T-cell (primary cell): ENCODE measurements at regions of chr3 and their contacts with region 1.

Region 1: DNA sequence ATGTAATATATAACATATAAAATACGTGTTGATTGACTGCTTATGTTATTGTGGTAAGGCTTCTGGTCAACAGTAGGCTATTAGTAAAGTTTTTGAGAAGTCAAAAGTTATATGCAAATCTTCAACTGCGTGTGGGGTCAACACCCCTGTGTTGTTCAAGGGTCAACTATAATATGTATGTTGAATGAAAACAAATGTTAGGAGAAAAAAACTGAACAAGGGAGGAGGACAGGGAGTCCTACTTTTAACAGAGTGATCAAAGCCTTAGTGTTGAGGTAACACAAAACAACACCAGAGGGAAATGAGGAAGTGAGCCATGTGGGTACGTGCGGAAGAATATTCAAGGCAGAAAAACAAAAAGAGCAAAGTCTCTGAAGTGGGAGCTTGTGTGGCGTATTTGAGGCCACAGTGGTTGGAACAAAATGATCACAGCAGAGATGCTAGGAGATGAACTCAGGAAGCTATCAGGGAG is 62.5 kb downstream of the SFMBT1 start:
- DNase-seq: peak; percentile 22 to 88 (median 51)
- ATAC-seq: peak; percentile 93 to 96 (median 94)
- H3K4me3 ChIP-seq: no peak overlapping the region
- H3K4me3 Mint-ChIP-seq: peak overlapping the region; percentile 53 to 56 (median 55)
- H3K27ac ChIP-seq: peak overlapping the region; percentile 40
- H3K27ac Mint-ChIP-seq: peak overlapping the region; percentile 86 to 93
- H3K4me1 ChIP-seq: peaks cover 13 to 26% of the 10 kb centered on the region in 2 experiments
- H3K4me1 Mint-ChIP-seq: peaks cover 44 to 57% (median 50%) of the 10 kb centered on the region in 3 donors
- H3K27me3 ChIP-seq: no peaks in the 10 kb centered on the region
- H3K27me3 Mint-ChIP-seq: no peaks in the 10 kb centered on the region

Region 2: GRCh38 chr3:52570076-52570475 is 413.3 kb before region 1 on chr3:
- CTCF ChIA-PET with region 1: no interaction called
- POLR2A ChIA-PET with region 1: interaction called in 1 of 2 experiments, 10 read pairs
- DNase-seq: no peak
- ATAC-seq: no peak
- H3K4me3 ChIP-seq: no peak overlapping the region
- H3K4me3 Mint-ChIP-seq: no peak overlapping the region
- H3K27ac ChIP-seq: no peak overlapping the region
- H3K27ac Mint-ChIP-seq: peak overlapping the region in 1 of 2 donors; percentile 16
- H3K4me1 ChIP-seq: no peaks in the 10 kb centered on the region
- H3K4me1 Mint-ChIP-seq: no peaks in the 10 kb centered on the region
- H3K27me3 ChIP-seq: no peaks in the 10 kb centered on the region
- H3K27me3 Mint-ChIP-seq: no peaks in the 10 kb centered on the region

Region 3: DNA sequence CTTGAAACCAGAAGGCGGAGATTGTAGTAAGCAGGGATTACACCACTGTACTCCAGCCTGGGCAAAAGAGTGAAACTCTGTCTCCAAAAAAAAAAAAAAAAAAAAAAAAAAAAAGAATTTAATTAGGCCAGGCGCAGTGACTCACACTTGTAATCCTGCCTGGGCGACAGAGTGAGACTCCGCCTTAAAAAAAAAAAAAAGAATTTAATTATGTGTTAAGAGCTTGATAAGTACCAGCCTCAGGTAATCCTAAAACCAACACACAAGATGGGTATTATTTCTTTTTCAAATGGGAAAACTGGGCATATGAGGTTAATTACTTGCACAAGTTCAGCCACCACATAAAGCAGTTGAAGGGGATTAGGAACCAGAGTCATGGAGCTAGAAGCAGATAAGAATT is 346.7 kb before region 1 on chr3:
- CTCF ChIA-PET with region 1: no interaction called
- POLR2A ChIA-PET with region 1: no interaction called
- DNase-seq: no peak
- ATAC-seq: no peak
- H3K4me3 ChIP-seq: no peak overlapping the region
- H3K4me3 Mint-ChIP-seq: no peak overlapping the region
- H3K27ac ChIP-seq: no peak overlapping the region
- H3K27ac Mint-ChIP-seq: no peak overlapping the region
- H3K4me1 ChIP-seq: no peaks in the 10 kb centered on the region
- H3K4me1 Mint-ChIP-seq: no peaks in the 10 kb centered on the region
- H3K27me3 ChIP-seq: no peaks in the 10 kb centered on the region
- H3K27me3 Mint-ChIP-seq: no peaks in the 10 kb centered on the region

Region 4: GRCh38 chr3:52670621-52671521 is 312.5 kb before region 1 on chr3:
- CTCF ChIA-PET with region 1: no interaction called
- POLR2A ChIA-PET with region 1: no interaction called
- DNase-seq: peak in 2 of 35 experiments; percentile 11 to 51
- ATAC-seq: peak; percentile 34 to 69 (median 60)
- H3K4me3 ChIP-seq: no peak overlapping the region
- H3K4me3 Mint-ChIP-seq: peak overlapping the region in 1 of 3 donors; percentile 42
- H3K27ac ChIP-seq: peak overlapping the region; percentile 49
- H3K27ac Mint-ChIP-seq: peak overlapping the region; percentile 80 to 81
- H3K4me1 ChIP-seq: peaks cover 0 to 9% of the 10 kb centered on the region in 2 experiments
- H3K4me1 Mint-ChIP-seq: peaks cover 27 to 34% (median 30%) of the 10 kb centered on the region in 3 donors
- H3K27me3 ChIP-seq: no peaks in the 10 kb centered on the region
- H3K27me3 Mint-ChIP-seq: no peaks in the 10 kb centered on the region

Region 5: GRCh38 chr3:52934630-52935530 is 48.5 kb before region 1 on chr3:
- CTCF ChIA-PET with region 1: interaction called, 4 to 10 read pairs
- POLR2A ChIA-PET with region 1: no interaction called
- DNase-seq: peak; percentile 13 to 74 (median 37)
- ATAC-seq: peak; percentile 93 to 98 (median 96)
- H3K4me3 ChIP-seq: no peak overlapping the region
- H3K4me3 Mint-ChIP-seq: no peak overlapping the region
- H3K27ac ChIP-seq: no peak overlapping the region
- H3K27ac Mint-ChIP-seq: peak overlapping the region; percentile 23 to 63
- H3K4me1 ChIP-seq: no peaks in the 10 kb centered on the region
- H3K4me1 Mint-ChIP-seq: peaks cover 9 to 18% (median 17%) of the 10 kb centered on the region in 3 donors
- H3K27me3 ChIP-seq: no peaks in the 10 kb centered on the region
- H3K27me3 Mint-ChIP-seq: no peaks in the 10 kb centered on the region

Region 6: DNA sequence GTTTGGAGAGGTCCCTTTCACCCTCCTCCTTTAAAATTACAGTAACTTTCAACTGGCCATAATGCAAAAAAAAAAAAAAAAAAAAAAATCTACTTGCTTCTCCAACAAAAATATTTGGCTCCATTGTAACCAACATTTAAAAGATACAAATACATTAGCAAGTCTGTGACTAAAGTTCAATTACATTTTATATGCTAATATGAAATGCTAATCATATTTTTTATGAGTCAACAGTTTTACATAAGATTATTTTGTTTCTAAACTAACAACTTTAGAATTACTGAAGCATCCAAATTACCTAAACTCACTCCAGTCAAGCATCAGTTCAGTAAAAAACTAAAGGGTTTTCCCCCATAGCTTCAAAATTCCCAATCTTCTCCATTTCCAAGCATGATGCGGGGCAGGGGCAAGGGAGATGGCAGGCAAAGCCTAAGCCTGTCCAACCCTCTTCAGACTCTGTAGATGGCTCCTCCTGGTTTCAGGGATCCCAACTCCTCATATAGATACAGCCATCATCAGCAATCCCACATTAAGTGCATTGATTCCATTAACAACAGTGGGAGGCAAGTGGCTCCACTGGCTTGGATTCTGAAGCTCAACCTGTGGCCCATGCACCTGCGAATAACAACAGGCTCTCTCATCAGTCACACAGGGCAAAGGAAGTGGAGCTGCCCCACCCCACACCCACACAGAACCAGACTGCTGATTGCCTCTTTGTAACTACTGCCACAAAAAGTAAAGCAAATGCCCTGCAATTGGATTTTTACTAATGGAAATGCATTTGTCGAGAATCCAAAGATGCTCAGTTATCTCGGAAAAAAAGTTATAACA is 47.5 kb after region 1 on chr3:
- CTCF ChIA-PET with region 1: interaction called in 1 of 2 experiments, 5 read pairs
- POLR2A ChIA-PET with region 1: interaction called in 1 of 2 experiments, 12 read pairs
- DNase-seq: peak in 34 of 35 experiments; percentile 20 to 69 (median 40)
- ATAC-seq: peak; percentile 86 to 99 (median 96)
- H3K4me3 ChIP-seq: peak overlapping the region in 1 of 2 donors; percentile 23
- H3K4me3 Mint-ChIP-seq: peak overlapping the region; percentile 29 to 61 (median 43)
- H3K27ac ChIP-seq: peak overlapping the region; percentile 22
- H3K27ac Mint-ChIP-seq: peak overlapping the region; percentile 91 to 96
- H3K4me1 ChIP-seq: peaks cover 12 to 25% of the 10 kb centered on the region in 2 experiments
- H3K4me1 Mint-ChIP-seq: peaks cover 32 to 70% (median 59%) of the 10 kb centered on the region in 3 donors
- H3K27me3 ChIP-seq: no peaks in the 10 kb centered on the region
- H3K27me3 Mint-ChIP-seq: no peaks in the 10 kb centered on the region